ENCODE measurements at regions of chr19 and their contacts with region 1.

Region 1: DNA sequence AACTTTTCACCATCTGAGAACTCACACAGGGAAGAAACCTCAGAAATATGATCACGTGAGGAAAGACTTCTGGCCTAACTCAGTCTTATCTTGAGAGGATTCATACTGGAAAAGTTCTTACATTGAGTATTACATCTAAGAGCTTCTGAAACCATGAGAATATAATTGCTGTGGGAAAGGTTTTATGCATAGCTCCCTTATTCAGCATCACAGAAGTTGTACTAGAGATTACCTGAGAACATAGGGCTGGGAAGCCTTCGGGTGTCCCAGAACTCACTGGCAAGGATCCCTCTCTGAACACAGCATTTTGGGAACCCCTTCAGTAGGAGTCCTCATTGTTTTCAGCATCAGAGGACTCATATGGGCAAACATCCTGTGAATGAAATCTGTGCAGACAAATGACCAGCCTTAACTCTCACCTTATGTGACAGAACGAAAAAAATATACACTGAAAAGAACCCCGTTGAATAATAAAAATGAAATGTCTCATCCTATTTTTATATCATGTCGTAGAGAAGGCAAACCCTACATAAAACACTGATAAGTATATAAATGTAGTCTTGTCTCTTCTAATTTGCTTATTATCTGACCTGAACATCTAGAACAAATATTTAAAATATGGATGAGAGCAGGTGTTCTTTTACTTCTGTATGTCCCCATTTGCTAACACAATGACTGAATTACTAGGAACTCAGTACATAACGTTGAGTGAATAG is 14.2 kb downstream of the ZNF274 start:
- DNase-seq: peak in 2 of 9 experiments; percentile 13 to 33
- ATAC-seq: peak; percentile 49
- H3K4me3 ChIP-seq: peak overlapping the region in 1 of 2 experiments; percentile 16
- H3K4me3 Mint-ChIP-seq: no peak overlapping the region
- H3K27ac ChIP-seq: no peak overlapping the region
- H3K27ac Mint-ChIP-seq: no peak overlapping the region
- H3K4me1 ChIP-seq: no peaks in the 10 kb centered on the region
- H3K4me1 Mint-ChIP-seq: peaks cover 3% of the 10 kb centered on the region
- H3K27me3 ChIP-seq: no peaks in the 10 kb centered on the region
- H3K27me3 Mint-ChIP-seq: no peaks in the 10 kb centered on the region
- CTCF ChIP-seq: no peak

Region 2: GRCh38 chr19:58128041-58128685 is 68.9 kb before region 1 on chr19:
- CTCF ChIA-PET with region 1: no interaction called
- POLR2A ChIA-PET with region 1: no interaction called
- intact Hi-C with region 1: loop called in 1 of 2 experiments (anchors 10 kb)
- DNase-seq: no peak
- ATAC-seq: no peak
- H3K4me3 ChIP-seq: peak overlapping the region in 1 of 2 experiments; percentile 16
- H3K4me3 Mint-ChIP-seq: no peak overlapping the region
- H3K27ac ChIP-seq: no peak overlapping the region
- H3K27ac Mint-ChIP-seq: no peak overlapping the region
- H3K4me1 ChIP-seq: no peaks in the 10 kb centered on the region
- H3K4me1 Mint-ChIP-seq: no peaks in the 10 kb centered on the region
- H3K27me3 ChIP-seq: no peaks in the 10 kb centered on the region
- H3K27me3 Mint-ChIP-seq: no peaks in the 10 kb centered on the region
- CTCF ChIP-seq: no peak

Region 3: GRCh38 chr19:58182989-58183816 is 13.9 kb before region 1 on chr19 and contains the start of gene ZNF274:
- CTCF ChIA-PET with region 1: interaction called, 5 read pairs
- POLR2A ChIA-PET with region 1: interaction called, 10 read pairs
- intact Hi-C with region 1: no loop called
- DNase-seq: peak; percentile 88 to 96 (median 94)
- ATAC-seq: peak; percentile 86
- H3K4me3 ChIP-seq: peak within 1 kb of the TSS; percentile 90 to 94
- H3K4me3 Mint-ChIP-seq: peak within 1 kb of the TSS; percentile 91
- H3K27ac ChIP-seq: peak within 1 kb of the TSS; percentile 99 to 100
- H3K27ac Mint-ChIP-seq: peak within 1 kb of the TSS; percentile 100
- H3K4me1 ChIP-seq: peaks cover 9% of the 10 kb centered on the region
- H3K4me1 Mint-ChIP-seq: peaks cover 22% of the 10 kb centered on the region
- H3K27me3 ChIP-seq: no peaks in the 10 kb centered on the region
- H3K27me3 Mint-ChIP-seq: no peaks in the 10 kb centered on the region
- CTCF ChIP-seq: no peak
- total RNA-seq, gene ZNF274: 52.7 to 58.9 TPM

Region 4: DNA sequence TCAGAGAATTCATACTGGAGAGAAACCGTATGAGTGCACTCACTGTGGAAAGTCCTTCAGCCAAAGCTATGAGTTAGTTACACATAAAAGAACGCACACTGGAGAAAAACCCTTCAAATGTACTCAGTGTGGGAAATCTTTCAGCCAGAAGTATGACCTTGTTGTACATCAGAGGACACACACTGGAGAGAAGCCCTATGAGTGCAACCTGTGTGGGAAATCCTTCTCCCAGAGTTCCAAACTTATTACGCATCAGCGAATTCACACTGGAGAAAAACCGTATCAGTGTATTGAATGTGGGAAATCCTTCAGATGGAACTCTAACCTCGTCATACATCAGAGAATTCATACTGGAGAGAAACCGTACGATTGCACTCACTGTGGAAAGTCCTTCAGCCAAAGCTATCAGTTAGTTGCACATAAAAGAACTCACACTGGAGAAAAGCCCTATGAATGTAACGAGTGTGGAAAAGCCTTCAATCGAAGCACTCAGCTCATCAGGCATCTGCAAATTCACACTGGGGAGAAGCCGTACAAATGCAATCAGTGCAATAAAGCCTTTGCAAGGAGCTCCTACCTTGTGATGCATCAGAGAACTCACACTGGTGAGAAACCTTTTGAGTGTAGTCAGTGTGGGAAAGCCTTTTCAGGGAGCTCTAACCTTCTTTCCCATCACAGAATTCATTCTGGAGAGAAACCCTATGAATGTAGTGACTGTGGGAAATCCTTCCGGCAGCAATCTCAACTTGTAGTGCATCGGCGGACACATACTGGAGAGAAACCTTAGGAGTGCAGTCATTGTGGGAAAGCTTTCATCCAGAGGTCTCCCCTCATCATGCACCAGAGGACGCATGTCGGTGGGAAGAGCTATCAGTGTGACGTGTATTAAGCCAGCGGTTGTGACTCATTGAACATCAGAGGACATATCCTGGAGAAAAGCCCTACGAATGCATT is 65.2 kb after region 1 on chr19:
- CTCF ChIA-PET with region 1: no interaction called
- POLR2A ChIA-PET with region 1: no interaction called
- intact Hi-C with region 1: loop called in 1 of 2 experiments (anchors 5 kb)
- DNase-seq: no peak
- ATAC-seq: no peak
- H3K4me3 ChIP-seq: peak overlapping the region in 1 of 2 experiments; percentile 24
- H3K4me3 Mint-ChIP-seq: no peak overlapping the region
- H3K27ac ChIP-seq: no peak overlapping the region
- H3K27ac Mint-ChIP-seq: no peak overlapping the region
- H3K4me1 ChIP-seq: no peaks in the 10 kb centered on the region
- H3K4me1 Mint-ChIP-seq: no peaks in the 10 kb centered on the region
- H3K27me3 ChIP-seq: no peaks in the 10 kb centered on the region
- H3K27me3 Mint-ChIP-seq: no peaks in the 10 kb centered on the region
- CTCF ChIP-seq: no peak

Measured in CD8-positive, alpha-beta T cell (primary cell).